ENCODE measurements at regions of chr14 and their contacts with region 1.

Region 1: DNA sequence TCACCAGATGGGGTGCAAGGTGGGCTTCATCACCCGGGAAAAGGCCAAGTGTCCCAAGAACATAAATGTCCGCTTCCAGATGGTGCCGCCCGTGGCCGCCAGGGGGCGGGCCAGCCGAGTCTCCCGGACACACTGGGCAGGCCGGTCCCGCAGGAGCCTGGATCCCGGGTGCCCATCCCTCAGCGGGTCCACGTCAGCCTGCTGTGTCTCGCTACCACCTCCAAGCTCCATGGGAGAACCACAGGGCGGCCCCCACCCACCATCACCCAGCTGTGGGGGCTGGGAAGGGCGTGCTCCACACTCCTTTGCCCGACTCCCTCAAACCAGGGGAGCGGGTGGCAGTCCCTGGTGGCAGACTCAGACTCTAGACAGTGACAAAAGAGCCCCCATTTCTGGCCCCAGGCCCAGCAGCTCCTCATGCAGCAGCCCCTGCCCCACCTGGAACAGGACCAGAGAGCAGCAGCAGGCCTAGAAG is 22.0 kb upstream of the NUDT14 start:
- DNase-seq: peak; percentile 82 to 94
- ATAC-seq: peak; percentile 69
- H3K4me3 ChIP-seq: no peak overlapping the region
- H3K27ac ChIP-seq: no peak overlapping the region
- H3K4me1 ChIP-seq: no peaks in the 10 kb centered on the region
- H3K27me3 ChIP-seq: no peaks in the 10 kb centered on the region

Region 2: DNA sequence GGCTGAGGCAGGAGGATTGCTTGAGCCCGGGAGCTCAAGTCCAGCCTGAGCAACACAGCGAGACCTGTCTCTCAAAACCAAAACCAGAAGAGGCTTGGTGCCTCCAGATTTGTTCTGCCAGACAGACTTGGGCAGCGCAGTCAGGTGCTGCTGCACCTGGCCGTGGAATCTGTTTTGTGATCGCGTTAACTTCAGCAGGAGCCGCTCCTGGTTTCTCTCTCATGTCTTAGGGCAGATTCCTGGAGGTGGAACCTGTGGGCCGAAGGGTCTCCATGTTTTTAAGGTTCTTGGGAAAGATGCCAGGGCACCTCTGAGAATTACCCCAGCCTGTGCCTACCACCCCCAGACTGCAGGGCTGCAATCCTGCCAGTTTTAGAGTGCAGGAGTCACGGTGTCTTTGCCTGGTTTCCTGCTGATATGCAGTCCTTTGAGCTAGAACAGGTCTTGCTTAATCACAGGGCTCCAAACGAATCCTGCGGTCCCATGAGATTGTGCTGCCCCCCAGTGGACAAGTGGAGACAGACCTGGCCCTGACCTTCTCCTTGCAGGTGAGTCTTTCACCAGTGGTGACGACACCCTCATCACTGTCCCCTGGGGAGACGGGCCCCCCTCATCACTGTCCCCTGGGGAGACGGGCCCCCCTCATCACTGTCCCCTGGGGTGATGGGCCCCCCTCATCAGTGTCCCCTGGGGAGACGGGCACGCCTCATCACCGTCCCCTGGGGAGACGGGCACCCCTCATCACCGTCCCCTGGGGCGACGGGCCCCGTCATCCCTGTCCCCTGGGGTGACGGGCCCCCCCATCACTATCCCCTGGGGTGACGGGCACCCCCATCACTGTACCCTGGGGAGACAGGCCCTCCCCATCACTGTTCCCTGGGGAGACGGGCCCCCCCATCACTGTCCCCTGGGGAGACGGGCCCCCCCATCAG is 149.1 kb after region 1 on chr14:
- intact Hi-C with region 1: loop called in 1 of 2 experiments (anchors 2 kb)
- DNase-seq: peak; percentile 84 to 92
- ATAC-seq: peak; percentile 82
- H3K4me3 ChIP-seq: no peak overlapping the region
- H3K27ac ChIP-seq: no peak overlapping the region
- H3K4me1 ChIP-seq: no peaks in the 10 kb centered on the region
- H3K27me3 ChIP-seq: no peaks in the 10 kb centered on the region

Region 3: GRCh38 chr14:105537369-105538164 is 334.5 kb after region 1 on chr14:
- intact Hi-C with region 1: loop called in 1 of 2 experiments (anchors 10 kb)
- DNase-seq: peak; percentile 55 to 85
- ATAC-seq: peak; percentile 72
- H3K4me3 ChIP-seq: no peak overlapping the region
- H3K27ac ChIP-seq: no peak overlapping the region
- H3K4me1 ChIP-seq: no peaks in the 10 kb centered on the region
- H3K27me3 ChIP-seq: no peaks in the 10 kb centered on the region

Region 4: GRCh38 chr14:105931808-105932483 is 728.9 kb after region 1 on chr14:
- intact Hi-C with region 1: no loop called
- DNase-seq: peak in 1 of 2 donors; percentile 5
- ATAC-seq: no peak
- H3K4me3 ChIP-seq: no peak overlapping the region
- H3K27ac ChIP-seq: no peak overlapping the region
- H3K4me1 ChIP-seq: no peaks in the 10 kb centered on the region
- H3K27me3 ChIP-seq: peaks cover 0 to 1% of the 10 kb centered on the region in 2 donors